ENCODE measurements at regions of chr1 and their contacts with region 1.

Region 1: DNA sequence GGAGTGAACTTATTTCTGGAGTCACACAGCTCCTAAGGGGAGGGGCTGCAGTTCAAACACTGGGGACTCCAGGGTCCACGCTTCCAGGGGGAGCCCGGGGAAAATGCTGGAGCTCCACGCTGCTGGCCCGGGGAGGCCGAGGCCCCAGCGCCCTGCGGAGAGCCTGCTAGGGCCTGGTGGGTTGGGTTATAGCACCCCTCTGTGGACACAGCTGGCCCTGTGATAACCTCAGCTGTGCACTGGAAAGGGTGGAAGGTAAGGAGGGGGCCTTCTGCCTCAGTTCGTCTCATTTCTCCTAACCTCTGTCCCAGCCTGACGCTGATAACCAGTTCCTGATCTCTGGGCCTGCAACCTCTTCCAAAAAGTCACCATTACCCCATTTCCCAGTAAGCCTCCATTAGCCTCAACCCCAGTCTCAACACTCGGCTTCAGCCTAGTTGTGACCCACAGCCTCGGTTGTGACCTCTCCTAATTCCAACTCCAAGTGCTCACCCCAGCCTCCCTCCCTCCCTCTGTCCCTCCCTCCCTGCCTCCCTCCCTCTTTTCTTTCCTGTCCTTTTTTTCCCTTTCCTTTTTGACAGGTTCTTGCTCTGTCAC is 7.1 kb downstream of the NBL1 start:
- DNase-seq: no peak
- H3K4me3 ChIP-seq: no peak overlapping the region
- CTCF ChIP-seq: peak; percentile 86

Region 2: GRCh38 chr1:19341201-19342072 is 309.8 kb before region 1 on chr1:
- CTCF ChIA-PET with region 1: interaction called, 178 read pairs
- POLR2A ChIA-PET with region 1: no interaction called
- DNase-seq: no peak
- H3K4me3 ChIP-seq: no peak overlapping the region
- CTCF ChIP-seq: peak; percentile 78

Region 3: GRCh38 chr1:19374083-19374801 is 277.0 kb before region 1 on chr1:
- CTCF ChIA-PET with region 1: interaction called, 12 read pairs
- POLR2A ChIA-PET with region 1: no interaction called
- DNase-seq: no peak
- H3K4me3 ChIP-seq: no peak overlapping the region
- CTCF ChIP-seq: peak; percentile 42

Region 4: DNA sequence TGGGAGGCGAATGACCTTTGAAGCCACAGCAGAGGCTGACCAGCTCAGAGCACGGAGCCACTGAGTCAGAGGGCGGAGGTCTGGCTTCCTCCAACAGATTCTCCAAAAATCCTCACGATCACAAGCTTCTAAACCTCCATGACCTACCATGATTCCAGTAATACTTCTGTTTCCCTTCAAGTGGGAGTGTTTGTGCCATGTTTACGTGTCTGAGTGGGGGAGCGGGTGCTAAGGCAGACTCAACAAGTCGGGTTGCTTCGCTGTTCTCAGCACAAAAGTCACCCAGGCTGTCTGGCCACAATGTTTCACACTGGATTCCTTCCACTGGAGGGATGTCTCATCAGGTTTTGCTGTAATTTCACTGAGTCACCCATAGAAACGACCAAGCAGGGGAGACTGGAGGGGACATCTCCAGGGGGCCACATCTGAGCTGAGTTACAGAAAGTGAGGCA is 252.9 kb before region 1 on chr1:
- CTCF ChIA-PET with region 1: interaction called, 17 read pairs
- POLR2A ChIA-PET with region 1: no interaction called
- DNase-seq: peak; percentile 96
- H3K4me3 ChIP-seq: no peak overlapping the region
- CTCF ChIP-seq: peak; percentile 70

Region 5: GRCh38 chr1:19661721-19662228 is 10.5 kb after region 1 on chr1:
- CTCF ChIA-PET with region 1: interaction called, 67 read pairs
- POLR2A ChIA-PET with region 1: no interaction called
- DNase-seq: no peak
- H3K4me3 ChIP-seq: no peak overlapping the region
- CTCF ChIP-seq: peak; percentile 34